ENCODE measurements at regions of chr2 and their contacts with region 1.

Region 1: DNA sequence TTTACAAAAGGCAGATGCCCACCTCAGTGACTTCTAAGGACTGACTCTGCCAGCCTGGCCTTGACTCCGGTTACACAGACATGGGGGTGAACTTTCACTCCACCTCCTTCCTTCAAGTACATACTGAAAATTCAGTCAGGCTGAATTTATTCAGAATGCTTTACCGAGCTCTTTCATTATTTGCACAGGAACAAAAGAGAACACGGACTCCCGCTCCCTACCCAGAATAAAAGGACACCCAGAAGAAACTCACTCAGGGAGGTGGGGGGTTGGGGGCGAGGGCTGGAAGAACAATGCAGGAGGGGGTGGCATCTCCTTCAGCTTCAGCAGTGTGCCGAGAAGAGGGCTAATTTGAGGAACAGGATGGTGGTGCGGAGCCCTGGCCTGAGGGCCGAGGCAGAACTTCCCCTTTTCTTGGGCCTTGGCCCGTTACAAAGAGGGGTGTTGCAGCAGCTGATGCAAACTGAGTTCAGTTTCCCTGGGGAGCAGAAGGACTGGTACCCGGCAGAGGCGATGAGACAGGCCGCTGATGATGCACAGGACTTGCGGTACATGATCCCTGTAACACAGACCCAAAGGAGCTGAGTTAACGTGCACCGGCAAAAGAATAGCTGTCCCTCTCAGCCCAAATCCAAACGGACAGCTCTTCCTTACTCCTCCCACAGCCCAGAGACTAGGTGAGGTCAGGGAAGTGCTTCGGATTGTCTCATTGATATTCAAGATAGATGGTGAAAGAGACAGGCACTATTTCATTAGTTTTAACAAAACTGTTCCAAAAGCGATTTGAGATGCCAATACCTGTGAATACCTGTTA is 24.1 kb downstream of the LYPD1 start:
- DNase-seq: no peak
- H3K4me3 ChIP-seq: no peak overlapping the region
- H3K27ac ChIP-seq: no peak overlapping the region
- H3K4me1 ChIP-seq: no peaks in the 10 kb centered on the region
- H3K27me3 ChIP-seq: no peaks in the 10 kb centered on the region
- CTCF ChIP-seq: no peak
- POLR2A ChIP-seq: no peak

Region 2: DNA sequence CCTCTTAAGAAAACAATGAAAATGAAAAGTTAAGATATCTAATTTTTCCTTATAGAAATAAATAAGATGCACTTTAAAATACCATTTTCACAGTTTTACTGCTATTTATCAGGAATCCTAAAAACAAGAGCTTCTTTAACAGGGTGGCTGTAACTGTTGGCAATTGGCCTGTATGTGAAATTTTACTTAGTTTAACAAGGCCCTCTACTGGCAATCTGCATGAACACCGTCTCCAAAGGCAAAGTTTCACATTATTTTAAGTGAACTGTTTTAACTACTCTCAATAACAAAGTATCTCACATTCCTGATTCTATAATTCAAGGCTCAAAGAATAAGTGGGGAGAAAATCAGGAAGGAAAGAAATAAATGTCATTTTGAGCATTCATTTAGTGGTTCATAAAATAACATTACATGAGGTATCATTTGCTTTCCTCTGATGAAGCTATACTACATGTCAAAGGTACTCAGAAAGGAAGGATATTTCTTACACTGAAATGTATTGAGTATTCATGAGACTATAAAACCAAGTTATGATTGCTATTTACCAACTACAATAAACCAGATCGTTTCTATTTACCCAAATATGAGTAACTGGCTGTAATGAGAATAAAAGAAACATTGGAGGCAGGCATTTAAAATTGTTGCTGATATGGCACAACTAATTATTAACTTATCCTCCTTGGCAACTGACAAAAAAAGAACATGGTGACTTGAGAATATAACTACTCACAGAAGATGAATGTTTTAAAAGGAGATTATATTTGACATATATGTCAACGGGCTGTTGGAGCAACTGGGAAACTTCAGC is 915.3 kb after region 1 on chr2:
- intact Hi-C with region 1: loop called (anchors 10 kb)
- DNase-seq: peak; percentile 31
- H3K4me3 ChIP-seq: no peak overlapping the region
- H3K27ac ChIP-seq: no peak overlapping the region
- H3K4me1 ChIP-seq: no peaks in the 10 kb centered on the region
- H3K27me3 ChIP-seq: no peaks in the 10 kb centered on the region
- CTCF ChIP-seq: peak; percentile 25 to 76 (median 69)
- POLR2A ChIP-seq: no peak